ENCODE measurements at regions of chr22 and their contacts with region 1.

Region 1: GRCh38 chr22:37457093-37457893 is 28.9 kb downstream of the MFNG start:
- DNase-seq: peak; percentile 67
- H3K4me3 ChIP-seq: no peak overlapping the region
- H3K27ac ChIP-seq: no peak overlapping the region
- H3K4me1 ChIP-seq: peaks cover 21% of the 10 kb centered on the region
- H3K27me3 ChIP-seq: no peaks in the 10 kb centered on the region
- CTCF ChIP-seq: peak; percentile 97

Region 2: DNA sequence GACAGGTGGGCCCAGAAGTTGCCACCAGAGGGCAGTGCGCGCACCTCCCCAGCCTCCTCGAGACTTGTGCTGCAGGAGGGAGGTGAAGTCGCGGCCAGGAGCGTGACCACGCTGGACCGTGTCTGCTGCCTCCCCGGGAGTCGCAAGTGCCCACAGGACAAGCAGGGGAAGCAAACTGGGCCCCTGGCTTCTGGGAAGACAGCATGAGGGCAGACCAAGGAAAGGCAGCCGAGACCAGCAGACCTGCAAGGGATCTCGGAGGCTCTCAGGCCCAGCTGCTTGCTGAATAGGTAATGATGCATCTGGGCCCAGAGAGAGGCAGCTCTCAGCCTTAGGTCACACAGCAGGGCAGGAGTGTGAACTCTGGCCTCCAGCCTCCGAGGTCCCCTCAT is 290.6 kb before region 1 on chr22:
- CTCF ChIA-PET with region 1: no interaction called
- dilution Hi-C with region 1: no loop called
- in situ Hi-C with region 1: no loop called
- intact Hi-C with region 1: loop called (anchors 2 kb)
- DNase-seq: peak; percentile 53
- H3K4me3 ChIP-seq: no peak overlapping the region
- H3K27ac ChIP-seq: no peak overlapping the region
- H3K4me1 ChIP-seq: peaks cover 2% of the 10 kb centered on the region
- H3K27me3 ChIP-seq: no peaks in the 10 kb centered on the region
- CTCF ChIP-seq: peak; percentile 87 to 94

Region 3: DNA sequence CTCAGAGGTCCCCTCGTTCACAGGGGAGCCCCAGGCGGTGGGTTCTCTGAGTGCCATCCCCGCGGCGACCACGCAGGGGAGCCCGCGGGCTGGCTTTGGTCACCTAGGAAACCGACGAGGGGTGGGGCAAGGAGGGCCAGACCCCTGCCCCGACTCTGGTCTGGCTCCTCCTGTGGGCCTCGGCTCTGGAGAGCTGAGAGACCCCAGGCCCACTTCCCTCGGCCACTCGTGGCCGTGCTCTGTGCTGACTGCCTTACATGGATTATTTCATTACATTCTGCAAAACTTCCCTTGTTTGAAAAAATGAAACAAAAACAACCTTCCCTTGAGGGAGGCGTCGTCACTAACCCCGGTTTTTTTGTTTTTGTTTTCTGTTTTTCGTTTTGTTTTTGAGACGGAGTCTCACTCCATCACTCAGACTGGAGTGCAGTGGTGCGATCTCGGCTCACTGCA is 190.1 kb before region 1 on chr22:
- CTCF ChIA-PET with region 1: no interaction called
- dilution Hi-C with region 1: no loop called
- in situ Hi-C with region 1: loop called in 1 of 2 experiments (anchors 10 kb)
- intact Hi-C with region 1: loop called (anchors 1 kb)
- DNase-seq: no peak
- H3K4me3 ChIP-seq: peak overlapping the region; percentile 25 to 38 (median 31)
- H3K27ac ChIP-seq: no peak overlapping the region
- H3K4me1 ChIP-seq: peaks cover 2% of the 10 kb centered on the region
- H3K27me3 ChIP-seq: no peaks in the 10 kb centered on the region
- CTCF ChIP-seq: peak; percentile 70 to 87

Region 4: GRCh38 chr22:37324340-37325038 is 132.8 kb before region 1 on chr22:
- CTCF ChIA-PET with region 1: no interaction called
- dilution Hi-C with region 1: no loop called
- in situ Hi-C with region 1: loop called (anchors 5 kb)
- intact Hi-C with region 1: no loop called
- DNase-seq: no peak
- H3K4me3 ChIP-seq: no peak overlapping the region
- H3K27ac ChIP-seq: no peak overlapping the region
- H3K4me1 ChIP-seq: peaks cover 37% of the 10 kb centered on the region
- H3K27me3 ChIP-seq: no peaks in the 10 kb centered on the region
- CTCF ChIP-seq: no peak

Region 5: GRCh38 chr22:37442537-37442936 is 14.8 kb before region 1 on chr22:
- CTCF ChIA-PET with region 1: no interaction called
- dilution Hi-C with region 1: no loop called
- in situ Hi-C with region 1: no loop called
- intact Hi-C with region 1: no loop called
- DNase-seq: peak; percentile 67
- H3K4me3 ChIP-seq: no peak overlapping the region
- H3K27ac ChIP-seq: no peak overlapping the region
- H3K4me1 ChIP-seq: peaks cover 8% of the 10 kb centered on the region
- H3K27me3 ChIP-seq: no peaks in the 10 kb centered on the region
- CTCF ChIP-seq: no peak

Region 6: GRCh38 chr22:37594237-37594636 is 136.9 kb after region 1 on chr22:
- CTCF ChIA-PET with region 1: interaction called, 3 read pairs
- dilution Hi-C with region 1: no loop called
- in situ Hi-C with region 1: no loop called
- intact Hi-C with region 1: loop called (anchors 5 kb)
- DNase-seq: no peak
- H3K4me3 ChIP-seq: no peak overlapping the region
- H3K27ac ChIP-seq: no peak overlapping the region
- H3K4me1 ChIP-seq: no peaks in the 10 kb centered on the region
- H3K27me3 ChIP-seq: no peaks in the 10 kb centered on the region
- CTCF ChIP-seq: no peak

Measured in mammary epithelial cell (primary cell).